ENCODE measurements at regions of chr10 and their contacts with region 1.

Region 1: DNA sequence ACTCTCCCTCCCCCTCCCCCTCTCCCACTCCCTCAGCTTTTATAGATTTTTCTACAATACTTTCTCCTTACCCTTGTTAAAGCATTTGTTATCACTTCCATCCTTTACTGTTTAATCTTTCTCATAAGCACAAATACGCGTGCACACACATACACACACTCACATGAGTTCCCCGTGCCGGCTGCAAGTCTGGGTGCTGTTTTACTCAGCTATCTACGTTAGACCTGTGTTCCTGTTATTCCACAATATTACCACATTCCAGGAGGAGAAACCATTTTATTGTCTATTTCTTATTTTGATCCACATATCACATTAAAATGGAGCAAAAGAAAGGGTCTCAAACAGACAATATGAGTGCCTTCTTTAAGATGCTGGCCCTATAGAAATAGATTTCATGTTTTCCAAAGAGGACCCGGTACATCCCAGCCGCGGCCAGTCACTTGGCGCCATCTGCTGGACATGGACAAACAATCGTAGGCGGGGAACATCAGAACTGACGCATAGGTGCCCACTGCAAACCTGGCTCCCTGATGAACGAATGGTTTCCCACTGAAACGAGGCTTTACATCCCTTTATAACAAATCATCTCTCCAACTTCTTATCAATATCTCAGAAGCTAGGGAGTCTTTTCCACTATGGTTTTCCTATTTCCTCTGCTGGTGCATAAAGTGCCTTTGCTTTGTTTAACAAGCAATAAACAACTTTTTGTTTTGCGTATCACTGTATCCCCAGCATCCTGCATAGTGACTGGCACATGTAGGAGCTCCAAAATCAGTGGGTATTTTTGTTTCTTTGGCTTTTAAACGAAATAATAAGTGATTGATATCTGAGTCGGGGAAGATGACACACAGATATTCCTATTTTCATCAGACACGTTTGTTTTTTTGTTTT is 25.2 kb upstream of the OPTN start:
- DNase-seq: peak; percentile 53
- ATAC-seq: no peak
- H3K4me3 ChIP-seq: no peak overlapping the region
- H3K4me3 Mint-ChIP-seq: no peak overlapping the region
- H3K27ac ChIP-seq: no peak overlapping the region
- H3K27ac Mint-ChIP-seq: no peak overlapping the region
- H3K4me1 ChIP-seq: peaks cover 0 to 3% of the 10 kb centered on the region in 2 donors
- H3K4me1 Mint-ChIP-seq: no peaks in the 10 kb centered on the region
- H3K27me3 ChIP-seq: peaks cover 0 to 21% (median 16%) of the 10 kb centered on the region in 4 experiments
- H3K27me3 Mint-ChIP-seq: peaks cover 28% of the 10 kb centered on the region
- CTCF ChIP-seq: peak; percentile 70

Region 2: GRCh38 chr10:11782793-11783557 is 1291.8 kb before region 1 on chr10:
- CTCF ChIA-PET with region 1: interaction called, 5 read pairs
- POLR2A ChIA-PET with region 1: no interaction called
- intact Hi-C with region 1: loop called (anchors 10 kb)
- DNase-seq: peak; percentile 64
- ATAC-seq: peak; percentile 49
- H3K4me3 ChIP-seq: no peak overlapping the region
- H3K4me3 Mint-ChIP-seq: no peak overlapping the region
- H3K27ac ChIP-seq: no peak overlapping the region
- H3K27ac Mint-ChIP-seq: no peak overlapping the region
- H3K4me1 ChIP-seq: no peaks in the 10 kb centered on the region
- H3K4me1 Mint-ChIP-seq: peaks cover 1% of the 10 kb centered on the region
- H3K27me3 ChIP-seq: no peaks in the 10 kb centered on the region
- H3K27me3 Mint-ChIP-seq: peaks cover 9% of the 10 kb centered on the region
- CTCF ChIP-seq: peak; percentile 73

Region 3: GRCh38 chr10:12670004-12670403 is 404.8 kb before region 1 on chr10:
- CTCF ChIA-PET with region 1: no interaction called
- POLR2A ChIA-PET with region 1: no interaction called
- intact Hi-C with region 1: no loop called
- DNase-seq: no peak
- ATAC-seq: no peak
- H3K4me3 ChIP-seq: no peak overlapping the region
- H3K4me3 Mint-ChIP-seq: no peak overlapping the region
- H3K27ac ChIP-seq: no peak overlapping the region
- H3K27ac Mint-ChIP-seq: no peak overlapping the region
- H3K4me1 ChIP-seq: no peaks in the 10 kb centered on the region
- H3K4me1 Mint-ChIP-seq: no peaks in the 10 kb centered on the region
- H3K27me3 ChIP-seq: no peaks in the 10 kb centered on the region
- H3K27me3 Mint-ChIP-seq: no peaks in the 10 kb centered on the region
- CTCF ChIP-seq: no peak

Region 4: DNA sequence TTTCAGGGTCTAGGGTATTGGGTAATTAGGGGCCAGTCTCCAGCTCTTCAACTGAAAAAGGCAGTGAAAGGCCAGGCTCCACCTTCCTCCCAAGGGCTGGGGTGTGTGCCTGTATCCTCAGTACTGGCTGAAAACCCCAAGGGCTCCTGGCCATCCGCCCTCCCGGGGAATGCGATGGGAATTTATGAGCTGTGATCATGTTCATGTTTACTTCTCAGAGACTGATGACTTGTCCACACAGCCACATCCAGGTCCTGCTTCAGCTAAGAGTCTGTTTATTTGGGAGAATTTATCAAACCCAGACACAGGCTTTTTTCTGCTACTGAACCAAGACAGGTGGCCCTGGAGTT is 165.0 kb before region 1 on chr10:
- CTCF ChIA-PET with region 1: no interaction called
- POLR2A ChIA-PET with region 1: no interaction called
- intact Hi-C with region 1: no loop called
- DNase-seq: no peak
- ATAC-seq: no peak
- H3K4me3 ChIP-seq: no peak overlapping the region
- H3K4me3 Mint-ChIP-seq: no peak overlapping the region
- H3K27ac ChIP-seq: no peak overlapping the region
- H3K27ac Mint-ChIP-seq: no peak overlapping the region
- H3K4me1 ChIP-seq: no peaks in the 10 kb centered on the region
- H3K4me1 Mint-ChIP-seq: no peaks in the 10 kb centered on the region
- H3K27me3 ChIP-seq: no peaks in the 10 kb centered on the region
- H3K27me3 Mint-ChIP-seq: peaks cover 25% of the 10 kb centered on the region
- CTCF ChIP-seq: no peak

Region 5: GRCh38 chr10:13146383-13146782 is 71.6 kb after region 1 on chr10:
- CTCF ChIA-PET with region 1: no interaction called
- POLR2A ChIA-PET with region 1: no interaction called
- intact Hi-C with region 1: no loop called
- DNase-seq: no peak
- ATAC-seq: no peak
- H3K4me3 ChIP-seq: no peak overlapping the region
- H3K4me3 Mint-ChIP-seq: no peak overlapping the region
- H3K27ac ChIP-seq: no peak overlapping the region
- H3K27ac Mint-ChIP-seq: no peak overlapping the region
- H3K4me1 ChIP-seq: no peaks in the 10 kb centered on the region
- H3K4me1 Mint-ChIP-seq: no peaks in the 10 kb centered on the region
- H3K27me3 ChIP-seq: peaks cover 0 to 3% (median 0%) of the 10 kb centered on the region in 4 experiments
- H3K27me3 Mint-ChIP-seq: no peaks in the 10 kb centered on the region
- CTCF ChIP-seq: no peak

Measured in B cell (primary cell).